WTC11 (cell line): ENCODE measurements at regions of chr11 and their contacts with region 1.

Region 1: GRCh38 chr11:73099512-73100266 is 42.4 kb downstream of the FCHSD2 start:
- DNase-seq: peak; percentile 17
- ATAC-seq: no peak; the same call in 1 of the 2 replicates
- H3K4me3 Mint-ChIP-seq: no peak overlapping the region
- H3K27ac Mint-ChIP-seq: peak overlapping the region; percentile 54
- H3K4me1 Mint-ChIP-seq: peaks cover 20% of the 10 kb centered on the region
- H3K27me3 Mint-ChIP-seq: no peaks in the 10 kb centered on the region; the same call in 1 of the 2 replicates
- CTCF ChIP-seq: no peak

Region 2: DNA sequence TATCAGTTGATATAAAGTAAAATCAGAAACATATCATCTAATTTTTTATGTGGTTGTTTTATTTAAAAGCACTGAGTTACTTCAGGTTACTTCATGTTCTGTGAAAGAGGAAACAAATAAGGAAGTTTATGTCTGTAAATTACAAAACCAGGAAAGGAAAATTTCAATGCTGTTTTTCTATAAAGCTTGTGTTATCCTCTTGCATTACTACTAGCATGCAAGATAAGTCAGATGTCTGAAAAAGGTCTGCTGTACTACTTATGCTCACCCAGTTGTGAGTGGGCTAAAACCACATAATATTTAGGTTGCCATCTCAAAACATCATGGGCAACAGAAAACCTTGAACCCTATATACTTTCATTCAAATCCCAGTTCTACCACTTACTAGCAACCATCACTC is 164.0 kb before region 1 on chr11:
- CTCF ChIA-PET with region 1: no interaction called
- POLR2A ChIA-PET with region 1: interaction called, 10 read pairs
- DNase-seq: no peak
- ATAC-seq: no peak
- H3K4me3 Mint-ChIP-seq: no peak overlapping the region
- H3K27ac Mint-ChIP-seq: no peak overlapping the region
- H3K4me1 Mint-ChIP-seq: no peaks in the 10 kb centered on the region
- H3K27me3 Mint-ChIP-seq: no peaks in the 10 kb centered on the region
- CTCF ChIP-seq: no peak